GM10248 (cell line): ENCODE measurements at regions of chr2 and their contacts with region 1.

Region 1: DNA sequence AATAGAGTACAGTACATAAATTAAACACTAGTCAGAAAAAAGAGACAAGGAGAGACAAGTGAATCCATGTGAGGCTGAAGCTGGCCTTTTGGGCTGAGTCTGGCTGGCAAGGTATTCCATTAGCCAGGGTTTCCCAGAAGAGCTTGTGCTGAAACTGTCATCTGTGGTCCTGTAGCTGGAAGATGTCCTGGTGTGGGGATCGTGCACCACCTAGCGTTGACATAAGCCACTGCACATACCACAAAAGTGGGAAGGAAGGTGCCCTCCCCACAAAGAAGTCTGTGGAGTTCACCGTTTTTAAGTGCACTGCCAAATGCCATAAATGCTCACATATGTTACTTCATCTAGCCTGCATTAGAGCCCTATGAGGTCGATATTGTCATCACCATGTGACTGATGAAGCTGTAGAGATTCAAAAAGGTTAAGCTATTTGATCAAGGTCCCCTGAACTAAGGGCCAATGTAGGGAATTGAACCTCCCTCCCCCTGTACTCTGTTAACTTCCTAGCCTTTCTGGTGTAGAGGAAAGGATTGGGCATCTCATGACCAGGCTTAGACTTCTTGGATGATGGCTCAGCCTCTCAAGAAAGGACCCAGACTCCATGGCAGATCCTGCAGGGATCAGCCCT is 31.9 kb upstream of the GALNT14 start:
- DNase-seq: peak; percentile 72
- CTCF ChIP-seq: peak; percentile 90

Region 2: DNA sequence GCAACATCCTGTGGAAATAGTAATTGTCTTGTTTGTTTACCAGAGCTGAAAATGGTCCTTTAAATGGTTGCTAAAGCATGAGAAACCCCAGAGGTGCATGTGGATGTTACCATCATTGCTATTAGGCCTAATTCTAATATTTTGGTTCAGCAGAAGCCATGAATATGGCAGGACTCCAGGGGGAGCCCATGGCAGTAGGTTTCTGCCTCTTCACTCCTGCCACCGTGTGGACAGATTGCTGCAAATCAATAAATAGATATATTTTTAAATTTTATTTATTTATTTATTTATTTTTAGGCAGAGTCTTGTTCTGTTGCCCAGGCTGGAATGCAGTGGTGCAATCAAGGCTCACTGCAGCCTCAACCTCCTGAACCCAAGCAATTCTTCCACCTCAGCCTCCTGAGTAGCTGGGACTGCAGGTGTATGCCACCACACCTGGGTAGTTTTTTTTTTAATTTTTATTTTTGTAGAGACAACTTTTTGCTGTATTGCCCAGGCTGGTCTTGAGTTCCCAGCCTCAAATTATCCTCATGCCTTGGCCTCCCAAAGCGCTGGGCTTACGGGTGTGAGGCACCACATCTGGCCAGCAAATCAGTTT is 308.0 kb before region 1 on chr2:
- CTCF ChIA-PET with region 1: interaction called, 36 read pairs
- POLR2A ChIA-PET with region 1: no interaction called
- DNase-seq: peak; percentile 57
- CTCF ChIP-seq: peak; percentile 78

Region 3: DNA sequence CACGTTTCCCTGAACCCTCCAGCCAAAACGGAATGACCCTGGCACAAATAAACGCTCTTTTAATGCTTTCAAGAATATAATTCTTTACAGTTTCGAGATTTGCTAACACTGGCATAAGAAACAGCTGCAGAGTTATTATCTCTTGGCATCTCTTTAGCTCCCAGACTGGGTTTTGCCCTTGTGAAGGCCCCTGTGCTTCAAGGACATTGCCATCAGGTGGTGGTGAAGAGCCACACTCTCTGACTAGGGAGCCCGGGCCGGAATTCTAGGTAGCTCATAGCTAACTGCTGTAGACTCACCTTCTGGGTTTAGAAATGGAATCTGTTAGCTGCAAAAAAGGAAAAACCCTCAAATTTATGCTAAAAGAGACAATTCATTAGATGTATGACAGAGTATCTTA is 18.7 kb before region 1 on chr2:
- CTCF ChIA-PET with region 1: interaction called, 45 read pairs
- POLR2A ChIA-PET with region 1: no interaction called
- DNase-seq: no peak
- CTCF ChIP-seq: no peak

Region 4: DNA sequence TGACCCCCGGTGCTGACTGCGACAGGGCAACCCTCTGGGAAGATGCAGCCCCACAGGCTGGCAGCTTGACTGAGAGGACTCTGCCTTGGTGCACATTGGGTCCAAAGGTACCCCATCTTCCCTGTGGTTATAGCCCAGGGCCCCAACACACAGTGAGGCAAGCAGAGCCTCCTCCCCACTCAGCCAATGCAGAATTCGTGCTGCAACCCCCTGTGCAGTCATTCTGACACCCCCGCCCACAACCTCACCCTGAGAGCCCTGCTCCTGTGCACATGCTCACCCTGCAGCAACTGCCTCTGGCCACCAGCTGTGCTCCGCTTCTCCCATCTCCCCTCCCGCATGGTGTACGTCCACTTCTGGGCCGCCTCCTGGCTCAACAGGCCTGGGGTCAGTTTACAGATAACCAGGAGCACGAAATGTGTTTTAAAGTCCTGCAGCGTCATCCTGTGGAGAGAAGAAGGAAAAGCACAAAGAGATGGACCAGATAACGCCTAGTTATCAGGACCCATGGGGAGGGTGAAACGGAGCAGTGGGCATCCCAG is 22.7 kb after region 1 on chr2:
- CTCF ChIA-PET with region 1: interaction called, 15 read pairs
- POLR2A ChIA-PET with region 1: no interaction called
- DNase-seq: no peak
- CTCF ChIP-seq: no peak

Region 5: GRCh38 chr2:31207790-31208189 is 37.6 kb after region 1 on chr2:
- CTCF ChIA-PET with region 1: interaction called, 11 read pairs
- POLR2A ChIA-PET with region 1: no interaction called
- DNase-seq: no peak
- CTCF ChIP-seq: peak; percentile 22

Region 6: GRCh38 chr2:31226266-31226665 is 56.1 kb after region 1 on chr2:
- CTCF ChIA-PET with region 1: no interaction called
- POLR2A ChIA-PET with region 1: no interaction called
- DNase-seq: no peak
- CTCF ChIP-seq: no peak

Region 7: DNA sequence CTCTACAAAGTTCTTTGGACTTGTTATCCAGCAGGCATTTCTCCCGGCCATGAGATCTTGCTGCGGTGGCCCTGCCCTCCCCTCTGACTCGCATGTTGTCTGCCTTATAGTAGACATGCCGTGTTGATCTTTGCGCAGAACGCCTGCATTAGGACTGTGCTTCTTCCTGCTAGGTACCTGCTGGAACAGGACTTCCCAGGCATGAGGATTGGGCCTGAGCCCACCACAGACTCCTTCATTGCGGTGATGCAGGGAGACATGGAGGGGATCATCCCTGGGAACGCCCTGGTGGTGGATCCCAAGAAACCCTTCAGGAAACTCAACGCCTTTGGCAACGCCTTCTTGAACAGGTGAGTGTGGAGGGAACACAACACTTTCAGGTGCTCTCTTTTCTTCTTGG is 73.9 kb after region 1 on chr2:
- CTCF ChIA-PET with region 1: no interaction called
- POLR2A ChIA-PET with region 1: no interaction called
- DNase-seq: no peak
- CTCF ChIP-seq: no peak

Region 8: DNA sequence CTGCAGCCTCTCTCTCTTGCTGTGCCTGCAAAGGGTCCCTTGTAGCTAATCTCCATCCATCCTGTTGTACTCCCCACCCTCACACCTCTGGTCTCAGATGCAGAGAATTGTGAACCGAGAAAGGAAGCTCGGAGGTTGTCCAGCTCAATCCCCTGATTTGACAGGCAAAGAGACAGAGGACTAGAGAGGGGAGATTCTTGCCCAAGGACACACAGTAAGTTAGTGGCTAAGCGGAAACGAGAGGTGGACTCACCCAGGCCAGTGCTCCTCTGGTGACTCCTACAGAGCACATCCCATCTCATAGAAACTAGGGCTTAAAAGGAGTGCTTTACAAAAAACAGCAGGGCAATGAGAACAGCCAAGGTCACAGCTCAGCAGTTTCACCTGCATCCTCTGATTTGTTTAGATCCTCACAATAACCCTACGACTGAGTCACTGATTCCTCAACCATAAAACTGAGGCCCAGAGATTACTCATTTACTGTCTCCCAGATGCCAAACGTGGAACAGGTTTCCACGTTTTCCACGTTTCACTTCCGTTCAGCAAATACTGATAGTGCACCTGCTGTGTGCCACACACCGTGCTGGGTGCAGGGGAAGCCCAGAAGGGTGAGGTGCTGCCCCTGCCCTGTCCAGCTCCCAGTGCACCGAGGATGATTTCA is 85.9 kb after region 1 on chr2:
- CTCF ChIA-PET with region 1: interaction called, 10 read pairs
- POLR2A ChIA-PET with region 1: no interaction called
- DNase-seq: peak; percentile 61
- CTCF ChIP-seq: no peak

Region 9: GRCh38 chr2:31333527-31334183 is 163.5 kb after region 1 on chr2:
- CTCF ChIA-PET with region 1: interaction called, 14 read pairs
- POLR2A ChIA-PET with region 1: no interaction called
- DNase-seq: peak; percentile 72
- CTCF ChIP-seq: peak; percentile 90